Left ventricle myocardium inferior (tissue), 1 donor: ENCODE measurements at regions of chr15 and their contacts with region 1.

Region 1: GRCh38 chr15:62847900-62848489 is 194.6 kb upstream of the TPM1 start:
- DNase-seq: peak; percentile 71
- H3K4me3 ChIP-seq: no peak overlapping the region
- H3K27ac ChIP-seq: no peak overlapping the region
- H3K4me1 ChIP-seq: peaks cover 49% of the 10 kb centered on the region
- H3K27me3 ChIP-seq: no peaks in the 10 kb centered on the region
- CTCF ChIP-seq: peak; percentile 85

Region 2: DNA sequence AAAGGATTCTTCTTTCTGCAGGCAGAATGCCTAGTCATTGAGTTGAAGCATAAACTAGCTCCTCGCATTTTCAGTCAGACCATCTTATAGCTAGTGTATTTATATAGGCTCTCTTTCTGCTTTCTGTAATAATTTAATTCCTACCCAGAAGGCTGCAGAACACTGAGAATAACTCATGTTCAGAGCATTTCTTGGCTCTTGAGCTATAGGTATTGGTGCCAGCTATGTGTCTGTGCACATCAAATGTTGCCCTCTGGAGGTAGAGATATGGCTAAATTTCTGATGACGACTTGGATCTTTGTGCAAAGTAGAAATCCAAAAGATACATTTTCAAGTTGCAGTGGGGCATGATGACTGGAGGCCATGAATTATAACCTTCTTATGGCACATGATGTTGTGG is 141.7 kb before region 1 on chr15:
- intact Hi-C with region 1: no loop called
- DNase-seq: no peak
- H3K4me3 ChIP-seq: no peak overlapping the region
- H3K27ac ChIP-seq: no peak overlapping the region
- H3K4me1 ChIP-seq: no peaks in the 10 kb centered on the region
- H3K27me3 ChIP-seq: no peaks in the 10 kb centered on the region
- CTCF ChIP-seq: peak; percentile 21

Region 3: GRCh38 chr15:62792986-62793751 is 54.8 kb before region 1 on chr15:
- intact Hi-C with region 1: loop called (anchors 10 kb)
- DNase-seq: no peak
- H3K4me3 ChIP-seq: no peak overlapping the region
- H3K27ac ChIP-seq: no peak overlapping the region
- H3K4me1 ChIP-seq: peaks cover 9% of the 10 kb centered on the region
- H3K27me3 ChIP-seq: no peaks in the 10 kb centered on the region
- CTCF ChIP-seq: no peak

Region 4: GRCh38 chr15:63048115-63048775 is 200.2 kb after region 1 on chr15:
- intact Hi-C with region 1: loop called (anchors 10 kb)
- DNase-seq: peak; percentile 92
- H3K4me3 ChIP-seq: peak overlapping the region; percentile 83
- H3K27ac ChIP-seq: peak overlapping the region; percentile 99
- H3K4me1 ChIP-seq: peaks cover 92% of the 10 kb centered on the region
- H3K27me3 ChIP-seq: peaks cover 5% of the 10 kb centered on the region
- CTCF ChIP-seq: peak; percentile 88